MCF 10A (cell line): ENCODE measurements at regions of chr14 and their contacts with region 1.

Region 1: GRCh38 chr14:71855399-71856036 is 76.7 kb upstream of the RGS6 start:
- DNase-seq: peak; percentile 87
- H3K4me3 Mint-ChIP-seq: no peak overlapping the region
- H3K27ac Mint-ChIP-seq: no peak overlapping the region
- H3K4me1 Mint-ChIP-seq: peaks cover 10% of the 10 kb centered on the region
- H3K27me3 Mint-ChIP-seq: peaks cover 42% of the 10 kb centered on the region
- CTCF ChIP-seq: peak; percentile 75

Region 2: DNA sequence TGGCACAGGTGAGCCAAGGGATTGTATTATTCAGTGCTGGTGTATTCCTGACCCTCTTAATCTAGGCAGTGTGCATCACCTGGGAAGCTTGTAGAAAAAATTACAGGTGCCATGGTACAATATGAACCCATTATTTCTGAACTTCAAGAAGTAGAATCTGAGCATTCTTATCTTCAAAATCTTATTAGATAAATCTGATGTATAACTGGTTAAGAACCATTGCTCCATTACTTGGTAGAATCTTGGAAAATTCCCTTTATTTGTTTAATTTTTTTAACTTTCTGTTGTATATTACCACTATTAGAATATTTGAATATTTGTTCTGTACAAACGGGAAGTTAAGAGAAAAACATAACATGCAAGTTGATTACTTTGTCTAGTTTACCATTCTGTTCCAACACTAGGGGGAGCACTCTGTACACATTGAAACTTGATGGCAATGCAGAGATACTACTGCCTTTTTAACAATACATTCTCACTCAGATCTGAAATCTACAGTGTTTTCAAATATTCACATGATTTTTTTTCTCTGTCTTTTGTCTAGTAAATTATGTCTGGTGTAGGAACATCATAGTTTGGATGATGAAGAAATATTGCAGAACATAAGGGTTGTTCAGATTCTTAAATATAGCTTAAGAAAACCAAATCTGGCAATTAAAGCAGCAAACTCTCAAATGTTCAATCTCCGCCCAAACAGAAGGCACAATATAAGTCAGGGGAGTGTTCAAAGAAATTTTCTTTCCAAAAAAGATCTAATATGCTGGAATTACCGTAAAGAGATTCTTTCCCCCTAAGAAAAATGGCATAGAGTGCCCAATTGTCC is 751.6 kb before region 1 on chr14:
- CTCF ChIA-PET with region 1: interaction called, 7 read pairs
- POLR2A ChIA-PET with region 1: no interaction called
- intact Hi-C with region 1: loop called (anchors 1 kb)
- DNase-seq: peak; percentile 72
- H3K4me3 Mint-ChIP-seq: no peak overlapping the region
- H3K27ac Mint-ChIP-seq: no peak overlapping the region
- H3K4me1 Mint-ChIP-seq: peaks cover 4% of the 10 kb centered on the region
- H3K27me3 Mint-ChIP-seq: no peaks in the 10 kb centered on the region
- CTCF ChIP-seq: peak; percentile 66

Region 3: GRCh38 chr14:71138448-71139293 is 716.8 kb before region 1 on chr14:
- CTCF ChIA-PET with region 1: interaction called, 15 read pairs
- POLR2A ChIA-PET with region 1: interaction called, 5 read pairs
- intact Hi-C with region 1: loop called (anchors 1 kb)
- DNase-seq: peak; percentile 62
- H3K4me3 Mint-ChIP-seq: no peak overlapping the region
- H3K27ac Mint-ChIP-seq: no peak overlapping the region
- H3K4me1 Mint-ChIP-seq: peaks cover 13% of the 10 kb centered on the region
- H3K27me3 Mint-ChIP-seq: no peaks in the 10 kb centered on the region
- CTCF ChIP-seq: peak; percentile 96

Region 4: GRCh38 chr14:71591929-71592328 is 263.6 kb before region 1 on chr14:
- CTCF ChIA-PET with region 1: no interaction called
- POLR2A ChIA-PET with region 1: no interaction called
- intact Hi-C with region 1: no loop called
- DNase-seq: peak; percentile 55
- H3K4me3 Mint-ChIP-seq: no peak overlapping the region
- H3K27ac Mint-ChIP-seq: peak overlapping the region; percentile 31
- H3K4me1 Mint-ChIP-seq: peaks cover 8% of the 10 kb centered on the region
- H3K27me3 Mint-ChIP-seq: no peaks in the 10 kb centered on the region
- CTCF ChIP-seq: no peak

Region 5: GRCh38 chr14:71720978-71721624 is 134.4 kb before region 1 on chr14:
- CTCF ChIA-PET with region 1: interaction called, 10 read pairs
- POLR2A ChIA-PET with region 1: interaction called, 3 read pairs
- intact Hi-C with region 1: loop called (anchors 2 kb)
- DNase-seq: peak; percentile 79
- H3K4me3 Mint-ChIP-seq: no peak overlapping the region
- H3K27ac Mint-ChIP-seq: peak overlapping the region; percentile 88
- H3K4me1 Mint-ChIP-seq: peaks cover 17% of the 10 kb centered on the region
- H3K27me3 Mint-ChIP-seq: no peaks in the 10 kb centered on the region
- CTCF ChIP-seq: peak; percentile 53